CD8-positive, alpha-beta T cell (primary cell): ENCODE measurements at regions of chr4 and their contacts with region 1.

Region 1: DNA sequence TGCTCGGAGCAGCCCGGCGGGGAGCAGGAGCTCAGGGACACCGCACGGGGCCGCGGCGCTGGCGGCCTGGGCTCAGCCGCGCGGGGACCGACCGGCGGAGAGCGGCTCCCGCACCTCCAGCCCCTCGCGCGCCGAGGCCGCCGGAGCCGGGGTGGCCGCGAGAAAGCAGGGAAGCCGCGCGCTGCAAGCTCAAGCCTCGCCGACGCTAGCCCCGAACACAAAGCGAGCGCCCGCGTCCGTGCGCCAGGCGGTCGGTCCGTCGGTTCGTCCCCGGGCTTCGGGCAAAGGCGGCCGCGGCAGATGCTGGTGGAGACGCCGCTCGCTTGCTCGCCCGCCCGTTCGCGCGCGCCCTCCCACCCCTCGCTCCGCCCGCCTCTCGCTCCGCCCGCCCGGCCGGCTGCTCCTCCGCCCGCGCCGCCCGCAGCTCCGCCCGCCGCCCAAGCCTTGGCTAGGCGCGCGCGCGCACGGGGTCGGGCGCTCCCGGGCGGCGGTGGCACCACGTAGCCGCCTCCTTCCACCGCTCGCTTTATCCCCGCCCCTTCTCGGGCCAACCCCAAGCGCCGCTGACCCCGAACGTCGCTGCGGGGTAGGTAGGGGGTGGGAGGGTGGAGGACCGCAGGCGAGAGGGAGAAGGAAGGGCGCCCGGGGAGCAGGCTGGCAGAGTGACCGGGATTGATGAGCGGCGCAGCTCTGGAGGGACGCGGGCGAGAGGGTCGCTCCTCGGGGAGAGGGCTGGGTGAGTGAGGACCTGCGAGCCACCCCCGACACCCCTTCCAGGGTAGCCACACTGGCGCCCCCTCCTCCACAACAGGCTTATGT is at the start of gene TSPAN5:
- DNase-seq: peak; percentile 49 to 90 (median 82)
- ATAC-seq: peak; percentile 64
- H3K4me3 ChIP-seq: peak within 1 kb of the TSS; percentile 81 to 86
- H3K4me3 Mint-ChIP-seq: peak within 1 kb of the TSS; percentile 97
- H3K27ac ChIP-seq: peak within 1 kb of the TSS; percentile 14 to 60
- H3K27ac Mint-ChIP-seq: peak within 1 kb of the TSS; percentile 88
- H3K4me1 ChIP-seq: peaks cover 56% of the 10 kb centered on the region
- H3K4me1 Mint-ChIP-seq: peaks cover 80% of the 10 kb centered on the region
- H3K27me3 ChIP-seq: no peaks in the 10 kb centered on the region
- H3K27me3 Mint-ChIP-seq: no peaks in the 10 kb centered on the region
- CTCF ChIP-seq: no peak
- total RNA-seq, gene TSPAN5: 1.6 to 1.9 TPM

Region 2: DNA sequence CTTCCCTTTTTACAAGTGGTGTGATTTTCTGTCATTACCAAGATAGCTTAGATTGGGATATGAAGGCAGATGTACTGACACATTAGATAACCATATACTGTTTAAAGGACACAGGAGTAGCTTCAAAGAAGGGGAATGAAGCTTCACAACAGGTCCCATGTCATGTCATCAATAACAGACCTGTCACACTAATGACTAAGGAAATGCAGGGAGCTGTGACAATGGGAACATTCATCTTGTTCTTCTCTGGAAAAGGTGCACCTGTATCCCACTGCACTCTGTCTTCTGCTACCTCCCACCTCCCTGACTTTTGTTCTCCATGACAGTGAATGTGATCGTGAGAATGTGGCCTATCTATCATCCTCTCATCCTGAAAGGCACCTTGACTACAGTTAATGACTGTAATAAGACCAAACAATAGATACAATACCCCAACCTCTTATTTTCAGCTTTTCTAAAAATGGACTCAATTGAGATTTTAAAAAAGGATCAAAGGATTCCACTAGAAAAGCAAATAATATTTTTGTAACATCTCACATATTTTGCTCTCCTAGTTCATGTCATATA is 987.7 kb before region 1 on chr4:
- CTCF ChIA-PET with region 1: no interaction called
- POLR2A ChIA-PET with region 1: no interaction called
- intact Hi-C with region 1: no loop called
- DNase-seq: no peak
- ATAC-seq: no peak
- H3K4me3 ChIP-seq: no peak overlapping the region
- H3K4me3 Mint-ChIP-seq: no peak overlapping the region
- H3K27ac ChIP-seq: no peak overlapping the region
- H3K27ac Mint-ChIP-seq: no peak overlapping the region
- H3K4me1 ChIP-seq: no peaks in the 10 kb centered on the region
- H3K4me1 Mint-ChIP-seq: no peaks in the 10 kb centered on the region
- H3K27me3 ChIP-seq: no peaks in the 10 kb centered on the region
- H3K27me3 Mint-ChIP-seq: no peaks in the 10 kb centered on the region
- CTCF ChIP-seq: no peak

Region 3: GRCh38 chr4:98260579-98261290 is 397.8 kb before region 1 on chr4:
- CTCF ChIA-PET with region 1: no interaction called
- POLR2A ChIA-PET with region 1: no interaction called
- intact Hi-C with region 1: loop called (anchors 2 kb)
- DNase-seq: peak; percentile 67 to 95 (median 88)
- ATAC-seq: peak; percentile 72
- H3K4me3 ChIP-seq: peak overlapping the region; percentile 89 to 96
- H3K4me3 Mint-ChIP-seq: peak overlapping the region; percentile 94
- H3K27ac ChIP-seq: peak overlapping the region; percentile 77 to 79
- H3K27ac Mint-ChIP-seq: peak overlapping the region; percentile 95
- H3K4me1 ChIP-seq: peaks cover 27% of the 10 kb centered on the region
- H3K4me1 Mint-ChIP-seq: peaks cover 51% of the 10 kb centered on the region
- H3K27me3 ChIP-seq: no peaks in the 10 kb centered on the region
- H3K27me3 Mint-ChIP-seq: no peaks in the 10 kb centered on the region
- CTCF ChIP-seq: no peak

Region 4: DNA sequence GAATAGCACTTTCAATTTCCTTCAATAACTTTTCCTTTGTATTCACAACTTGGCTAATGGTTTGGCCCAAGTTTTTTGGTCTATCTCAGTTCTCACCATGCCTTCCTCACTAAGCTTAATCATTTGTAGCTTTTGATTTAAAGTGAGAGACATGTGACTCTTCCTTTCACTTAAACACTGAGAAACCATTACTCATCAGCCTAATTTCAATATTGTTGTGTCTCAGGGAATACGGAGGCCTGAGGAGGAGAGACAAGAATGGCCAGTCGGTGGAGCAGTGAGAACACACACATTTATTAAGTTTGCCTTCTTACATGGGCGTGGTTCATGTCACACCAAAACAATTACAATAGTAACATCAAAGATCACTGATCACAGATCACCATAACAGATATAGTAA is 56.8 kb before region 1 on chr4:
- CTCF ChIA-PET with region 1: no interaction called
- POLR2A ChIA-PET with region 1: no interaction called
- intact Hi-C with region 1: loop called in 1 of 2 experiments (anchors 5 kb)
- DNase-seq: peak in 2 of 9 experiments; percentile 22 to 34
- ATAC-seq: peak; percentile 42
- H3K4me3 ChIP-seq: no peak overlapping the region
- H3K4me3 Mint-ChIP-seq: peak overlapping the region; percentile 1
- H3K27ac ChIP-seq: no peak overlapping the region
- H3K27ac Mint-ChIP-seq: peak overlapping the region; percentile 23
- H3K4me1 ChIP-seq: peaks cover 13% of the 10 kb centered on the region
- H3K4me1 Mint-ChIP-seq: peaks cover 42% of the 10 kb centered on the region
- H3K27me3 ChIP-seq: no peaks in the 10 kb centered on the region
- H3K27me3 Mint-ChIP-seq: no peaks in the 10 kb centered on the region
- CTCF ChIP-seq: no peak

Region 5: DNA sequence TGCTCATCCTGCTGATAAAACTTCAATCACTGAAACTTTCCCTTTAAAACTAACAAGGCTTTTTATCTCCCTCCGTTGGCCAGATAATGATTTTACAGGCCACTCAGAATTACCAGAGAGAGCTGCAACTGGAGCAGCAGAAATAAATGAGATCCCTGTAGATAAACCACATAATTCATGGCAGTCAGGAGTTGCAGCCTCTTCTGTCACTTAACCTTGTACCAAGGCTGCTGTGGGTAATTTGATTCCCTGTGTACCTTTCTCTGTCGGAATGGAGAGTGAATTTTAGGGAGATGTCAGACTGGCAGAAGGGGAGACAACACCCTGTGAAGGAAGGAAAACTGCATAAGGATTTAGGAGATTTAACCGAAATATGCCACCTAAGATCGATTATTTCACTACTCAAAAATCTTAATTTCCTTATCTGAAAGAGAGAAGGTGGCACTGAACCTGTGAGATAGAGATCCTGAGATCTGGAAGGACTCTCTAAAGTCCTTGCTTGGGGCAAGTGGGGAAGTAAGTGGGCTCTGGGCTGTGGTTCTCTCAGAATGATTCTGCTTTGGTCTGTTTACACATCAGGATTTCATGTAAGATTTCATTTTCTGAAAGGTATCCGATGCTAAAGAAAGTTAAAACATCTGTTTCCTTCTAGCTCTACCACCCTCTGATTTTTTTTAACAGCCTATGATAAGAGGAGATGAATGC is 14.2 kb after region 1 on chr4:
- CTCF ChIA-PET with region 1: no interaction called
- POLR2A ChIA-PET with region 1: interaction called, 3 read pairs
- intact Hi-C with region 1: loop called in 1 of 2 experiments (anchors 2 kb)
- DNase-seq: no peak
- ATAC-seq: no peak
- H3K4me3 ChIP-seq: no peak overlapping the region
- H3K4me3 Mint-ChIP-seq: no peak overlapping the region
- H3K27ac ChIP-seq: no peak overlapping the region
- H3K27ac Mint-ChIP-seq: no peak overlapping the region
- H3K4me1 ChIP-seq: no peaks in the 10 kb centered on the region
- H3K4me1 Mint-ChIP-seq: peaks cover 14% of the 10 kb centered on the region
- H3K27me3 ChIP-seq: no peaks in the 10 kb centered on the region
- H3K27me3 Mint-ChIP-seq: no peaks in the 10 kb centered on the region
- CTCF ChIP-seq: no peak

Region 6: GRCh38 chr4:99088481-99089365 is 430.2 kb after region 1 on chr4 and contains the start of gene ADH5:
- CTCF ChIA-PET with region 1: no interaction called
- POLR2A ChIA-PET with region 1: no interaction called
- intact Hi-C with region 1: loop called (anchors 5 kb)
- DNase-seq: peak; percentile 88 to 94 (median 93)
- ATAC-seq: peak; percentile 96
- H3K4me3 ChIP-seq: peak within 1 kb of the TSS; percentile 59 to 91
- H3K4me3 Mint-ChIP-seq: peak within 1 kb of the TSS; percentile 99
- H3K27ac ChIP-seq: peak within 1 kb of the TSS; percentile 76 to 86
- H3K27ac Mint-ChIP-seq: peak within 1 kb of the TSS; percentile 99
- H3K4me1 ChIP-seq: peaks cover 23% of the 10 kb centered on the region
- H3K4me1 Mint-ChIP-seq: peaks cover 58% of the 10 kb centered on the region
- H3K27me3 ChIP-seq: no peaks in the 10 kb centered on the region
- H3K27me3 Mint-ChIP-seq: no peaks in the 10 kb centered on the region
- CTCF ChIP-seq: no peak
- total RNA-seq, gene ADH5: 50.0 to 51.7 TPM

Region 7: GRCh38 chr4:99949034-99949998 is 1290.8 kb after region 1 on chr4:
- CTCF ChIA-PET with region 1: no interaction called
- POLR2A ChIA-PET with region 1: no interaction called
- intact Hi-C with region 1: loop called in 1 of 2 experiments (anchors 1 kb)
- DNase-seq: peak; percentile 67 to 95 (median 88)
- ATAC-seq: peak; percentile 32
- H3K4me3 ChIP-seq: peak overlapping the region; percentile 89 to 97
- H3K4me3 Mint-ChIP-seq: no peak overlapping the region
- H3K27ac ChIP-seq: peak overlapping the region; percentile 85 to 97
- H3K27ac Mint-ChIP-seq: no peak overlapping the region
- H3K4me1 ChIP-seq: peaks cover 37% of the 10 kb centered on the region
- H3K4me1 Mint-ChIP-seq: peaks cover 35% of the 10 kb centered on the region
- H3K27me3 ChIP-seq: no peaks in the 10 kb centered on the region
- H3K27me3 Mint-ChIP-seq: no peaks in the 10 kb centered on the region
- CTCF ChIP-seq: peak; percentile 58